A549 (cell line): ENCODE measurements at regions of chr9 and their contacts with region 1.

Region 1: GRCh38 chr9:121286973-121287741 is 19.2 kb downstream of the GSN start:
- DNase-seq: peak; percentile 96 to 97
- ATAC-seq: peak; percentile 90 to 92
- H3K4me3 ChIP-seq: no peak overlapping the region
- H3K27ac ChIP-seq: peak overlapping the region; percentile 92 to 93
- H3K4me1 ChIP-seq: peaks cover 61% of the 10 kb centered on the region
- CTCF ChIP-seq: peak; percentile 35; the same call in 1 of the 3 replicates
- EP300 ChIP-seq: peak in 1 of 2 experiments; percentile 45; a peak in 2 of 5 replicates
- POLR2A ChIP-seq: no peak; the same call in 1 of the 2 replicates
- RAD21 ChIP-seq: peak in 1 of 2 experiments; percentile 44; a peak in 3 of 5 replicates

Region 2: GRCh38 chr9:120965344-120966012 is 321.7 kb before region 1 on chr9:
- CTCF ChIA-PET with region 1: no interaction called
- POLR2A ChIA-PET with region 1: no interaction called
- DNase-seq: no peak
- ATAC-seq: no peak
- H3K4me3 ChIP-seq: no peak overlapping the region
- H3K27ac ChIP-seq: no peak overlapping the region
- H3K4me1 ChIP-seq: no peaks in the 10 kb centered on the region
- CTCF ChIP-seq: no peak
- EP300 ChIP-seq: no peak
- POLR2A ChIP-seq: no peak
- RAD21 ChIP-seq: no peak

Region 3: GRCh38 chr9:121185178-121185745 is 101.9 kb before region 1 on chr9:
- CTCF ChIA-PET with region 1: no interaction called
- POLR2A ChIA-PET with region 1: no interaction called
- DNase-seq: no peak
- ATAC-seq: peak in 1 of 2 experiments; percentile 22; a peak in 1 of 6 replicates
- H3K4me3 ChIP-seq: no peak overlapping the region
- H3K27ac ChIP-seq: no peak overlapping the region
- H3K4me1 ChIP-seq: peaks cover 42% of the 10 kb centered on the region
- CTCF ChIP-seq: no peak
- EP300 ChIP-seq: no peak
- POLR2A ChIP-seq: no peak
- RAD21 ChIP-seq: no peak

Region 4: GRCh38 chr9:121249563-121249962 is 37.6 kb before region 1 on chr9:
- CTCF ChIA-PET with region 1: no interaction called
- POLR2A ChIA-PET with region 1: no interaction called
- DNase-seq: peak in 1 of 2 experiments; percentile 38
- ATAC-seq: peak in 1 of 2 experiments; percentile 53; a peak in 1 of 6 replicates
- H3K4me3 ChIP-seq: no peak overlapping the region
- H3K27ac ChIP-seq: no peak overlapping the region
- H3K4me1 ChIP-seq: no peaks in the 10 kb centered on the region
- CTCF ChIP-seq: no peak
- EP300 ChIP-seq: no peak
- POLR2A ChIP-seq: no peak
- RAD21 ChIP-seq: no peak

Region 5: GRCh38 chr9:121267689-121268597 is 19.2 kb before region 1 on chr9 and contains the start of gene GSN:
- CTCF ChIA-PET with region 1: interaction called, 19 read pairs
- POLR2A ChIA-PET with region 1: interaction called, 19 read pairs
- DNase-seq: peak; percentile 62 to 69
- ATAC-seq: peak; percentile 89 to 92
- H3K4me3 ChIP-seq: peak within 1 kb of the TSS; percentile 95
- H3K27ac ChIP-seq: peak within 1 kb of the TSS; percentile 80 to 92
- H3K4me1 ChIP-seq: peaks cover 28% of the 10 kb centered on the region
- CTCF ChIP-seq: no peak
- EP300 ChIP-seq: no peak
- POLR2A ChIP-seq: peak; percentile 91
- RAD21 ChIP-seq: no peak; a peak in 1 of 5 replicates
- polyA plus RNA-seq, gene GSN: 77.2 and 88.5 TPM in 2 replicates

Region 6: GRCh38 chr9:121299467-121300234 is 12.5 kb after region 1 on chr9:
- CTCF ChIA-PET with region 1: interaction called, 11 read pairs
- POLR2A ChIA-PET with region 1: no interaction called
- DNase-seq: no peak
- ATAC-seq: peak; percentile 60 to 65; a peak in 5 of 6 replicates
- H3K4me3 ChIP-seq: peak overlapping the region; percentile 60
- H3K27ac ChIP-seq: peak overlapping the region; percentile 68 to 84
- H3K4me1 ChIP-seq: peaks cover 38% of the 10 kb centered on the region
- CTCF ChIP-seq: no peak; the same call in 2 of the 3 replicates
- EP300 ChIP-seq: no peak
- POLR2A ChIP-seq: no peak
- RAD21 ChIP-seq: no peak

Region 7: DNA sequence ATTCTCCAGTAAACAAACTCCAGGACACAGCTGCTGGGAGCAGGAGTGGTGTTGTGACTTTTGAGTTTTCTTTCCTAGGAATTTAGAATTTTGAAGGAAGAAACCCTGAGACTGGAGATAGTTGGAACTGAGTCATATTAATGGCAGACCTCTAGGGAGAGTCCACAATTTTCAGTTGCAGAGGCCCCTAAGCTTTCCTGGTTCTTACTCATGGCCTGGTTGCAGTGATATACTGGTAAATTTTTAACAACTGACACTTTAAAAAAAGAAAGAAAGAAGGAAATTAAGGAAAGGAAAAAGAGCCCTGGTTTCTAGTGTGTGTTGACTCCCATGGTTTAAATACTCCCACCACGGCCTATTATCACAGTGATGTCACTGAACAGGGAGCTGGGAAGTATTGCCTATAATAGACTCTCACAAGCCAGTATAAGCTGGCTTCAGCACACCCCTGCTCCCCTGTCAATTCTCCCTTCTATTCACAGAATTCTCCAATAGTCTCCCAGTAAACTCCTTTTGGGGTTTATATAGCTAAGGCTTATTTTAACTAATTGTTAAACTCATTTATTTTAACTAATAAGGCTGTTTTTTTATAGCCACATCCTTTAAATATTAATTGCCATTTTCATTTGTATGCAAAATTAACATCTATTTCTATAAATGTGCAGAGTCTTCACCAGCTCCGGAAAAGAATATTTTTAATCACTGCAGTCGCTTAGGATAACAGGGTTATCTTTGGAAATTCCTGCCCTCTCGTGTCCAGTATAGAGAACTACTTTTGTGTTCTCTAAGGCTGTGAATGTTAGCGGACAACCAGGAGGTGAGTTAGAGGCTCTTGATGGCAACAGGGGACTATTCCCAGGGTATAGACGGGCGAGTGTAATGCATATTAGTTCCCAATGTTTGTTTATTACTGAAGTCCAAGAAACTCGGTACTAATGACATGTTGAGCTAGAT is 152.8 kb after region 1 on chr9:
- CTCF ChIA-PET with region 1: interaction called, 12 read pairs
- POLR2A ChIA-PET with region 1: no interaction called
- DNase-seq: peak; percentile 49 to 70
- ATAC-seq: peak; percentile 92 to 97
- H3K4me3 ChIP-seq: no peak overlapping the region
- H3K27ac ChIP-seq: no peak overlapping the region
- H3K4me1 ChIP-seq: no peaks in the 10 kb centered on the region
- CTCF ChIP-seq: peak; percentile 40
- EP300 ChIP-seq: no peak
- POLR2A ChIP-seq: no peak
- RAD21 ChIP-seq: peak; percentile 33 to 41; a peak in 2 of 5 replicates

Region 8: GRCh38 chr9:121550569-121551512 is 263.7 kb after region 1 on chr9:
- CTCF ChIA-PET with region 1: no interaction called
- POLR2A ChIA-PET with region 1: no interaction called
- DNase-seq: peak; percentile 69
- ATAC-seq: peak; percentile 69 to 83
- H3K4me3 ChIP-seq: peak overlapping the region; percentile 44
- H3K27ac ChIP-seq: peak overlapping the region; percentile 9 to 75; a peak in 3 of 6 replicates
- H3K4me1 ChIP-seq: peaks cover 9% of the 10 kb centered on the region; the same call in 1 of the 3 replicates
- CTCF ChIP-seq: peak; percentile 83
- EP300 ChIP-seq: no peak
- POLR2A ChIP-seq: no peak
- RAD21 ChIP-seq: peak; percentile 75 to 83